Dendritic cell treated with granulocyte-macrophage colony-stimulating factor and Interleukin-4, amounts not matched to agents 40 ng/mL and 50 ng/mL, for 4 days (primary cell): ENCODE measurements at regions of chr1 and their contacts with region 1.

Region 1: GRCh38 chr1:110780600-110781484 is 92.1 kb upstream of the CD53 start:
- H3K4me3 Mint-ChIP-seq: no peak overlapping the region
- H3K27ac Mint-ChIP-seq: no peak overlapping the region
- H3K4me1 Mint-ChIP-seq: peaks cover 14% of the 10 kb centered on the region
- H3K27me3 Mint-ChIP-seq: peaks cover 6% of the 10 kb centered on the region

Region 2: GRCh38 chr1:110524311-110525251 is 256.3 kb before region 1 on chr1:
- intact Hi-C with region 1: loop called (anchors 2 kb)
- H3K4me3 Mint-ChIP-seq: no peak overlapping the region
- H3K27ac Mint-ChIP-seq: no peak overlapping the region
- H3K4me1 Mint-ChIP-seq: peaks cover 22% of the 10 kb centered on the region
- H3K27me3 Mint-ChIP-seq: peaks cover 53% of the 10 kb centered on the region

Region 3: DNA sequence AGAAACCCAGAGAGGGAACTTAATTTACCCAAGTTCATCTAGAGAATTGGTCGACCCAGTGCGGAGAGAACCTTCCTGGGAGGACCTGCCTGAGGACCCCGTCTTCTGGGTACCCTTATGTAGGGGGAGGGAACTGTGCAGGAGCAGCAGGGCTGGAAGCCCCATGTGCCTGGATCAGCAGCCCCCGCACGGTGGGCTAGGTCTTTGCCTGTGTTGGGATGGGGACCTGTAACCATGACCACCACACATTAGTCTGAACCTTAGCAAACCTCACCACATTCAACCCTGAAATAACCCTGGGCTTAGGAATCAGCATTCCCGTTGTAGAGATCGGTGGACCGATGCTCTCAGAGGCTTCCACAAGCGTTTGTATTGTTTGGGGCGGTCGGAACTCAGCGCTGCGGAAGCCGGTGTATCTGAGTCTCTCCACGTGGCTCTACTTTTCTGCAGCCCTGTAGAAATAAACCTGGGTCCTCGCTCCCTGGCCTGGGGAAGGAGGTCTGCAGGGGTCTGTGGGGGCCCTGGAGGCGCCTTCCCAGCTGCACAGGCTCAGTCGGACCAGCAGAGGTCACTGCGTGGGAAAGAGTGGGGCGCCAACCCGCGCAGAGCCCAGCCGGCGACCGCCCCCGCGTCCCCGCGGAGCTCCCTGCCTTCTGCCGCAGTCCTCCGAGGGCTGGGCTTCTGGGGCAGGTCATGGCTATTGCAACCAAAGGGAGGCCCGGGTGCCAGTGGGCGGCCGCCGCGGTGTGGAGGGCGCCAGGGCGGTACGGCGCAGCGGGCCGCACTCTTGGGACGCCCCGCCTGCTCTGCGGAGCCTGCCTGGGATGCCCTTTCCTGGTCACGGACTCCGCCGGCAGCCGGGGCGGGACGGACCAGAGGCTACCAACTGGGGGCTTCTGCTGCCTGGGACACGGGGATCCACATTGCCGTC is 225.7 kb before region 1 on chr1:
- intact Hi-C with region 1: loop called (anchors 10 kb)
- H3K4me3 Mint-ChIP-seq: peak overlapping the region; percentile 35
- H3K27ac Mint-ChIP-seq: no peak overlapping the region
- H3K4me1 Mint-ChIP-seq: no peaks in the 10 kb centered on the region
- H3K27me3 Mint-ChIP-seq: peaks cover 65% of the 10 kb centered on the region

Region 4: GRCh38 chr1:110990536-110990935 is 209.7 kb after region 1 on chr1:
- intact Hi-C with region 1: loop called (anchors 10 kb)
- H3K4me3 Mint-ChIP-seq: no peak overlapping the region
- H3K27ac Mint-ChIP-seq: no peak overlapping the region
- H3K4me1 Mint-ChIP-seq: no peaks in the 10 kb centered on the region
- H3K27me3 Mint-ChIP-seq: peaks cover 17% of the 10 kb centered on the region